Mammary epithelial cell (primary cell): ENCODE measurements at regions of chr2 and their contacts with region 1.

Region 1: DNA sequence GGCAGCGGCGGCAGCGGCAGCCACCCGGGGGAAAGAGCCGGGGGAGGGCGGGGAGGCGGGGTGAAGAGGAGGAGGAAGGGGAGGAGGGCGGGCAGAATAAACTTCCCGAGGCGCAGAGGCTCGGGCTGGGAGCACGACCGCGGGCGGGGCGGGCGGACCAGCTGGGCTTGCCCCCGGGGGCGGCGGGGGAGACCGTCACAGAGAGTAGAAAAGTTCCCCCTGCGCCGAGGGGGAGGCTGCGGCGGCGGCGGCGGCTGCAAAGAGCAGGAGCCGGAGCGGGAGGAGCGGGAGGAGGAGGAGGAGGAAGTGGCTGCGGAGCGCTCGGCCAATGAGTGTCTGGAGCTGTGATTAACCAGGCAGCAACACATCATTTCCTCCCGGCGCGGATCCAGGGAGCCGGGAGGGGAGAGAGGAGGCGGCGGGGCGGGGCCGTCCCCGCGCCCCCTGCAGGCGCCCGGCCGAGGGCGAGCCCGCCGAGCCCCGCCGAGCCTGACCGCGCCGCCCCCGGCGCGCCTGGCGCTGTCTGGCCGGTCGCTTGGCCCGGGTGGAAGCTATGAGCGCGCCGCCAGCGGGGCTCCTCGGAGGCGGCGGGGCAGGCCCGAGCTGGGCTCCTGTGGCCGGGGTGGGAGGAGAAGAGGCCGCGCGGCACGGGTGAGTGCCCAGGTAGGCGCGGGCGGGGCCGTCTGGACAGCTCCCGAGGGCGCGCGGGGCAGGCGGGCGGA is at the start of gene ACVR1:
- DNase-seq: peak; percentile 96
- H3K4me3 ChIP-seq: peak within 1 kb of the TSS; percentile 76 to 92 (median 82)
- H3K27ac ChIP-seq: peak within 1 kb of the TSS; percentile 70
- H3K4me1 ChIP-seq: peaks cover 38% of the 10 kb centered on the region
- H3K27me3 ChIP-seq: no peaks in the 10 kb centered on the region
- CTCF ChIP-seq: peak; percentile 10 to 23
- total RNA-seq, gene ACVR1: 35.1 to 41.2 TPM

Region 2: DNA sequence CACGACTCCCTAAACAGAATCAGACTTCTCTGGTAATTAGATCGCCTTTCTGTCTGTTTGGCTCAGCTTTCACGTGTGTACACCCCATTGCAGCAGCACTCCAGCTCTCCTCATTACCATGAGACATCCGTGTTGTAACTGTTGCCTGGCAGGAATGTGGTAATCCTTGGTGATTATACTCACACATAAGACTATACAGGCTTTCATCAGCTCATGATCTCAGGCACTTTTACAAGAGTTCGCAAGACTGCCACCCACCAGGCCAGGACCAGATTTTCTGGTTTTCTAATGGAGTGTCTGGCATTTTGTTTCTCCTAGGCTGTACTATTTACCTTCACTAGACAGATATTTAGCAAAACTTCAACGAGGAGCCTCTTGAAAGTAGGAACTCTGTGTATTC is 50.3 kb before region 1 on chr2:
- CTCF ChIA-PET with region 1: no interaction called
- dilution Hi-C with region 1: no loop called
- in situ Hi-C with region 1: no loop called
- intact Hi-C with region 1: loop called (anchors 1 kb)
- DNase-seq: peak; percentile 93
- H3K4me3 ChIP-seq: no peak overlapping the region
- H3K27ac ChIP-seq: peak overlapping the region; percentile 43
- H3K4me1 ChIP-seq: peaks cover 13% of the 10 kb centered on the region
- H3K27me3 ChIP-seq: no peaks in the 10 kb centered on the region
- CTCF ChIP-seq: no peak

Region 3: GRCh38 chr2:157905092-157905491 is 28.9 kb after region 1 on chr2:
- CTCF ChIA-PET with region 1: no interaction called
- dilution Hi-C with region 1: no loop called
- in situ Hi-C with region 1: no loop called
- intact Hi-C with region 1: no loop called
- DNase-seq: no peak
- H3K4me3 ChIP-seq: no peak overlapping the region
- H3K27ac ChIP-seq: no peak overlapping the region
- H3K4me1 ChIP-seq: peaks cover 8% of the 10 kb centered on the region
- H3K27me3 ChIP-seq: no peaks in the 10 kb centered on the region
- CTCF ChIP-seq: no peak

Region 4: GRCh38 chr2:157932480-157933159 is 56.4 kb after region 1 on chr2:
- CTCF ChIA-PET with region 1: no interaction called
- dilution Hi-C with region 1: no loop called
- in situ Hi-C with region 1: no loop called
- intact Hi-C with region 1: no loop called
- DNase-seq: no peak
- H3K4me3 ChIP-seq: no peak overlapping the region
- H3K27ac ChIP-seq: no peak overlapping the region
- H3K4me1 ChIP-seq: no peaks in the 10 kb centered on the region
- H3K27me3 ChIP-seq: no peaks in the 10 kb centered on the region
- CTCF ChIP-seq: no peak

Region 5: DNA sequence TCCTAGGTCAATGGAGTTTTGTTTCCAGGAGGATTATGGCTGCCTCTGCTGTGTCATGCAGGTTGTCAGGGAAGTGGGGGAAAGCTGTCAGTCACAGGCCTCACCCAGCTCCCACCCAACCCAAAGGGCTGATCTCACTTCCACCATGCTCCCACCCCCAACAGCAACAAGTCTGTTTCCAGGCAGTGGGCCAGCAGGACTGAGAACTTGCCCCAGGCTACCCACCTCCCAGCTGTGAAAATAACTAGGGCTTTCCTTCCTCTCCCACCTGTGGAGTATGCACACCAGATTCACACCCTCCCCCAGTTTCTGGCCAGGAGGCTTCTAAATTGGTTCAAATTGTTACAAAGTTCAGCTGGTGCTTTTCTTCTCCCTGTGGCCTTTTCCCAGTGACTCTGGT is 95.5 kb after region 1 on chr2:
- CTCF ChIA-PET with region 1: no interaction called
- dilution Hi-C with region 1: loop called (anchors 5 kb)
- in situ Hi-C with region 1: no loop called
- intact Hi-C with region 1: no loop called
- DNase-seq: peak; percentile 67
- H3K4me3 ChIP-seq: no peak overlapping the region
- H3K27ac ChIP-seq: no peak overlapping the region
- H3K4me1 ChIP-seq: peaks cover 8% of the 10 kb centered on the region
- H3K27me3 ChIP-seq: no peaks in the 10 kb centered on the region
- CTCF ChIP-seq: no peak